Gastrocnemius medialis (tissue), 4 donors: ENCODE measurements at regions of chr1 and their contacts with region 1.

Region 1: DNA sequence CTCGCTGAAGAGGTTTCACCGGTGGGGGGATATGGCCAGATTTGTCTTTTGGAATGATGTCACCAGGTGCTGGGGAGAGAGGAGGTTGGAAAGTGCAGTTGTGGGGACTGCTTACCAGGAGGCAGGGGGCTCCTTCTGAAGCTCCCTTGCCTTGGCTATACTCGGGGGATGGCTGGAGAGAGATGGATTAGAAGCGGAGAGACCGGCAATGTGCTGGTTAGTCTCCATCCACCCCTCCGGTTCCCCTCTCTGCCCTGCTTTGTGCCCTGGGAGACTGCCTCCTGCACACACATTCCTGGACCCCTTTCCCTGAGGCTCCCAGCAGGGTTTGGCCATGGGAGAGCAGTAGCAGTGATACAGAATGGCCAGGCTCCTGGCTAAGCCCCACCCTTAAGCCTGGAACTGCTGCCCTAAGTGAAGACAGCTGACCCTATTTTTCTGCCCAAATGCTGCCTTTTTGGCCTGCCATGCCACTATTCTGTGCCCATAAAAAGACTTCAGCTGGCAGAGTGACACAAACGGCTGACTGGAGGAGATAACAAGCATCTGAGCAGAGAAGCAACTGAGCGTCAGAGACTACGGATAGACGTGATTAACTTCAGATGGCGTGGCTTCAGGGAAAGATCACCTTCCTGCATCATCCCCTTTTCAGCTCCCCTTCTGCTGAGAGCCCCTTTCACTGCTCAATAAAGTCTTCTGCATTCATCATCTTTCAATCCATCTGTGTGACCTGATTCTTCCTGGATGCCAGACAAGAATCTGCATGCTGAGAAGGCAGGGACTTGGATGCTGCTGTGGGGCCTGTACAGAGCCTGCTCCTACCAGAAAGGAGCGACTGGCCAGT is 14.5 kb upstream of the VPS13D start:
- DNase-seq: no peak
- ATAC-seq: no peak
- H3K4me3 ChIP-seq: no peak overlapping the region
- H3K27ac ChIP-seq: no peak overlapping the region
- H3K4me1 ChIP-seq: no peaks in the 10 kb centered on the region
- H3K27me3 ChIP-seq: no peaks in the 10 kb centered on the region
- CTCF ChIP-seq: no peak
- POLR2A ChIP-seq: no peak

Region 2: GRCh38 chr1:11802973-11803885 is 412.1 kb before region 1 on chr1:
- in situ Hi-C with region 1: no loop called
- intact Hi-C with region 1: no loop called
- DNase-seq: peak; percentile 84 to 91
- ATAC-seq: peak; percentile 31 to 36
- H3K4me3 ChIP-seq: peak overlapping the region; percentile 67 to 95 (median 78)
- H3K27ac ChIP-seq: peak overlapping the region; percentile 92 to 99 (median 96)
- H3K4me1 ChIP-seq: peaks cover 54 to 55% of the 10 kb centered on the region in 2 donors
- H3K27me3 ChIP-seq: no peaks in the 10 kb centered on the region
- CTCF ChIP-seq: no peak
- POLR2A ChIP-seq: peak; percentile 74 to 80

Region 3: DNA sequence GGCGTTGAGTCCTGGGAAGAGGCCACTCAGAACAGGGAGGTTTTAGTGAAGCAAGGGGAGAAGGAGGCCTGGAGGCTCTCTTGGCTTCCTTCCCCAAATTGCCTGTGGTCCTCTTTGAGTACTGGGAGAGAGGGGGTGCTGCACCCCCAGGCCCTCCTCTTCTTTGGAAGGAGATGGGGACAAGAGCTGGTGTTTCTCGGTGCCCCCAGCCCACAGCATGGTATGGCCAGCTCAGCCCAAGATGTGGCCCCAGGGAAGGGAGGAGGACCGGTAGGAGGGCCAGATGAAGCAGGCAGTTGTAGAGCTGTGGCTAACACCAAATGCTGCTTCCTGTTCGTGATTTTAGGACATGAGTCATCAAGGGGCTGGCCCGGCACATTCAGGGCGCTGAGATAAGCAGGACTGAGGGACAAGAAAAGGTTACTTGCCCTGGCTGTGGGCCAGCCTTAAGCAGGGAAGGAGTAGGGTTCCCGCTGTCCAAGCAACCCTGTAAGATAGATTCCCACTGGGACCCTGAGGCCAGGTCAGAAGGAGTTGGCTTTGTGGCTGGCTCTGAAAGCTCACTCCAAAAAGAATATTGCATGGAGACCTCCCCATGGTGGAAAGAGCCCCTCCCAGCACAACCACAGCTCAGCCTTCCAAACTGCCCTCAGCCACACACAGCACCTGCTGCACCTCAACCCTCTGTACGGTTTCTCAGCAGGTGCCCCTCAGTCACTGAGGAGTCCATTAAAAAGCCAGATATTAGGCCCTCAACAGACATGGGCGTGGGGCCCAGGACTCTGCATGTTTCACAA is 53.5 kb before region 1 on chr1:
- in situ Hi-C with region 1: no loop called
- intact Hi-C with region 1: no loop called
- DNase-seq: peak; percentile 74 to 89
- ATAC-seq: peak; percentile 89 to 93
- H3K4me3 ChIP-seq: no peak overlapping the region
- H3K27ac ChIP-seq: peak overlapping the region; percentile 42 to 80 (median 75)
- H3K4me1 ChIP-seq: peaks cover 14 to 18% of the 10 kb centered on the region in 2 donors
- H3K27me3 ChIP-seq: no peaks in the 10 kb centered on the region
- CTCF ChIP-seq: no peak
- POLR2A ChIP-seq: peak; percentile 25 to 41

Region 4: GRCh38 chr1:12275369-12275768 is 60.0 kb after region 1 on chr1:
- in situ Hi-C with region 1: loop called in 1 of 4 experiments (anchors 10 kb)
- intact Hi-C with region 1: no loop called
- DNase-seq: no peak
- ATAC-seq: no peak
- H3K4me3 ChIP-seq: no peak overlapping the region
- H3K27ac ChIP-seq: no peak overlapping the region
- H3K4me1 ChIP-seq: peaks cover 5 to 7% of the 10 kb centered on the region in 2 donors
- H3K27me3 ChIP-seq: no peaks in the 10 kb centered on the region
- CTCF ChIP-seq: peak; percentile 9 to 66 (median 28)
- POLR2A ChIP-seq: no peak